ENCODE measurements at regions of chr15 and their contacts with region 1.

Region 1: DNA sequence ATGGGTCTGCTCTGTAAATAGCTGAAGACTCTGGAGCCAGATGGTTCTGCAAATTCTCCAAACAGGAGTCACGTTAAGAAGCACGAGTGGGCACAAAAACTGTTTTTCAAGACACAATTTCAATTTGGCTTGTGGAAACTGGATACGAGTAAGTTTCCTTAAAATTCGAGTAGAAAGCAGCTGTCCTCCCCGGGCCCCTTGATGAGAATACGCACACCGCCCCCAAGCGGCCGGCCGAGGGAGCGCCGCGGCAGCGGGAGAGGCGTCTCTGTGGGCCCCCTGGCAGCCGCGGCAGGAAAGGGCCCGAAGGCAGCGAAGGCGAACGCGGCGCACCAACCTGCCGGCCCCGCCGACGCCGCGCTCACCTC is 778 bp upstream of the THBS1 start:
- DNase-seq: peak; percentile 98
- ATAC-seq: peak; percentile 30
- H3K4me3 ChIP-seq: peak overlapping the region; percentile 46
- H3K27ac ChIP-seq: peak overlapping the region; percentile 78
- H3K4me1 ChIP-seq: peaks cover 8% of the 10 kb centered on the region
- H3K27me3 ChIP-seq: no peaks in the 10 kb centered on the region
- CTCF ChIP-seq: peak; percentile 99
- POLR2A ChIP-seq: no peak
- RAD21 ChIP-seq: peak; percentile 94

Region 2: DNA sequence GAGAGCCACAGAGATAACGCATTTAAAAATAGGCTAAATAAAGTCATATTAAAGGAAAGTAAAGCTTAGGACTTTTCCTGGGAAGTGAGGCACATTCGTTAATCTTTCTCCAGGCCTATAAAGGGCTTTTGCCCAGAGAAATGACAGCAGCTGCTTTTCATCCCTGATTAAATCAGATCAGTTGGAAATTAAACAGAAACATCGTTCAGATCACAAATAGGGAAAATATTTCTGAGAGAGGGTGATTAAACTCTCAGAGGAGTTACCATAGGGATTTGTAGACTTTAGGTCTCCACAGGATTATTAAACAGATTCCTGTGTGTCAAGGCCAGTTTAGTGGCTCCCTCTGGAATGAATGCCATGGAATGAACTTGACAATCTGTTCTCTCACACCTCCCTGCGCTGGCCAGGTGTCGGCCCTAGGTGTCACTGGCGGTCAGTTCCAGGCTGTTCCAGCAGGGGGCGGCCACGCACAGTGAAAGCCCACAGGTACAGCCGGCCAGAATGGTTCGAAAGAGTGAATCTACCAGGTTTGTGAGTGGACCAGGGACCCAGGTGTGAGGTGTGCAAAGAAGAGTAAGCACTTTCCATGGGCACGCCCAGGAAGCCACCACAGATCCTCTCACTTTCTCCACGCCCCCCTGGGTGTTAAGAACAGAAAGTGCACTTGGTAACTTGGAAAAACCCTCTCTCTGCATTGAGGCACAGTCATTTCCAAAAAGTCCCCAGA is 762.5 kb before region 1 on chr15:
- CTCF ChIA-PET with region 1: no interaction called
- POLR2A ChIA-PET with region 1: interaction called, 3 read pairs
- dilution Hi-C with region 1: no loop called
- in situ Hi-C with region 1: loop called (anchors 5 kb)
- intact Hi-C with region 1: loop called (anchors 2 kb)
- DNase-seq: peak; percentile 48
- ATAC-seq: peak; percentile 97
- H3K4me3 ChIP-seq: no peak overlapping the region
- H3K27ac ChIP-seq: peak overlapping the region; percentile 26
- H3K4me1 ChIP-seq: peaks cover 8% of the 10 kb centered on the region
- H3K27me3 ChIP-seq: no peaks in the 10 kb centered on the region
- CTCF ChIP-seq: peak; percentile 98
- POLR2A ChIP-seq: no peak
- RAD21 ChIP-seq: peak; percentile 95

Region 3: DNA sequence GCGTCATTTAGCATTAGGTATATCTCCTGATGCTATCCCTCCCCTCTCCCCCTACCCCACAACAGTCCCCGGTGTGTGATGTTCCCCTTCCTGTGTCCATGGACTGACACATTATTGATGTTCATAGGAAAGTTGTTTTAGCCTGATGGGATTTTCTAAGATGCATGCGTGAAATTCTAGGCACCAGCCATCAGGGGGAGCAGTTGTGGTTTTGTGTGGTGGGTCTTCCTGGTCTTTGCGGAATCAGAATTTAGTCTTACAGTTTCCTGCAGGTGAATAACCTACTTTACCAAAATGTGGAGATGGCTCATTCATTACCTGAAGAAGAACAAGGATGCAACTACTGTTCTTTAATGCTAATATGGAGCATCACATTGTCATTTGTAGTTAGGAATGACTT is 454.2 kb before region 1 on chr15:
- CTCF ChIA-PET with region 1: interaction called, 3 read pairs
- POLR2A ChIA-PET with region 1: interaction called, 5 read pairs
- dilution Hi-C with region 1: no loop called
- in situ Hi-C with region 1: loop called (anchors 5 kb)
- intact Hi-C with region 1: loop called (anchors 2 kb)
- DNase-seq: peak; percentile 68
- ATAC-seq: no peak
- H3K4me3 ChIP-seq: no peak overlapping the region
- H3K27ac ChIP-seq: peak overlapping the region; percentile 39; the same call in 1 of the 2 replicates
- H3K4me1 ChIP-seq: peaks cover 37% of the 10 kb centered on the region
- H3K27me3 ChIP-seq: no peaks in the 10 kb centered on the region
- CTCF ChIP-seq: peak; percentile 64
- POLR2A ChIP-seq: no peak
- RAD21 ChIP-seq: peak; percentile 62

Region 4: GRCh38 chr15:39199076-39199475 is 381.0 kb before region 1 on chr15:
- CTCF ChIA-PET with region 1: interaction called, 3 read pairs
- POLR2A ChIA-PET with region 1: interaction called, 10 read pairs
- dilution Hi-C with region 1: no loop called
- in situ Hi-C with region 1: no loop called
- intact Hi-C with region 1: no loop called
- DNase-seq: peak; percentile 69
- ATAC-seq: peak; percentile 40
- H3K4me3 ChIP-seq: no peak overlapping the region
- H3K27ac ChIP-seq: peak overlapping the region; percentile 70
- H3K4me1 ChIP-seq: peaks cover 25% of the 10 kb centered on the region
- H3K27me3 ChIP-seq: no peaks in the 10 kb centered on the region
- CTCF ChIP-seq: no peak
- POLR2A ChIP-seq: no peak
- RAD21 ChIP-seq: no peak

Region 5: DNA sequence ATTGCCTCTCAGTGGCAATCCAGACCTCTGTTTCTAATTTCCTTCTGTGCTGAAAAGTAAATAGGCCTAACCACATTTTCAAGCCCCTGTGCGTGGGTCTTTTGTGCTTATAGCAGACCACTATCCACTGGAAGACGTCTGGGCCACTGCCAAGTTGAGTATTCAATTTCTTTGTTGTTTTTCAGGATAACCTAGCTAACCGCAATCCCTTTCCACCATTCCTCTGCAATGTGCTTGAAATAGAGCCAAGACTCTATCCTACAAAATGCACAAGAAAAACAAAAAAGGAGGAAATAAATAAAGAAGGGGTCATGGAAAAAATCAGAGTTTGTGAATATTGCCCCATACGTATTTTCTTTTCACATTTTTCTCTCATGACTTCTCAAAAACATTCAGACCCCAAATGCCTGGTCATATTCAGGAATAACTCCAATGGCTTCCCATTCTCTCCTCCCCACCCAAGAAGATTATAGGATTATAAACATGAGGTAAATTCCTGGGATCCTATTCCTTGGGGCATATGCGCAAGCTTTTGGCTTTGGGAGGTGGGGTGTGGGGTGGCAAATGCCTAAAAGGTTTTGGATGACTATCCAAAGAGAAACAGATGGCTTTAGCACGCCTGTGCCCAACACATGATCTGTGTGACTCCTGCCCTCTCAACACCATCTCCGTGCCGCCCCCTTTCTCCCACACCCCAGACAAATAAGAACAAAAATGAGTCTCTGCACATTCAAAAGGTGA is 217.1 kb before region 1 on chr15:
- CTCF ChIA-PET with region 1: interaction called, 3 read pairs
- POLR2A ChIA-PET with region 1: interaction called, 7 read pairs
- dilution Hi-C with region 1: no loop called
- in situ Hi-C with region 1: no loop called
- intact Hi-C with region 1: loop called (anchors 1 kb)
- DNase-seq: peak; percentile 96
- ATAC-seq: peak; percentile 61
- H3K4me3 ChIP-seq: no peak overlapping the region
- H3K27ac ChIP-seq: peak overlapping the region; percentile 78; the same call in 1 of the 2 replicates
- H3K4me1 ChIP-seq: peaks cover 16% of the 10 kb centered on the region
- H3K27me3 ChIP-seq: no peaks in the 10 kb centered on the region
- CTCF ChIP-seq: no peak
- POLR2A ChIP-seq: no peak
- RAD21 ChIP-seq: no peak

Region 6: GRCh38 chr15:39459548-39459947 is 120.6 kb before region 1 on chr15:
- CTCF ChIA-PET with region 1: no interaction called
- POLR2A ChIA-PET with region 1: no interaction called
- dilution Hi-C with region 1: no loop called
- in situ Hi-C with region 1: no loop called
- intact Hi-C with region 1: no loop called
- DNase-seq: no peak
- ATAC-seq: no peak
- H3K4me3 ChIP-seq: no peak overlapping the region
- H3K27ac ChIP-seq: no peak overlapping the region
- H3K4me1 ChIP-seq: peaks cover 10% of the 10 kb centered on the region
- H3K27me3 ChIP-seq: no peaks in the 10 kb centered on the region
- CTCF ChIP-seq: no peak
- POLR2A ChIP-seq: no peak
- RAD21 ChIP-seq: no peak

Region 7: GRCh38 chr15:39511000-39511915 is 68.8 kb before region 1 on chr15:
- CTCF ChIA-PET with region 1: interaction called, 4 read pairs
- POLR2A ChIA-PET with region 1: no interaction called
- dilution Hi-C with region 1: no loop called
- in situ Hi-C with region 1: no loop called
- intact Hi-C with region 1: loop called (anchors 2 kb)
- DNase-seq: peak; percentile 93
- ATAC-seq: peak; percentile 97
- H3K4me3 ChIP-seq: no peak overlapping the region; the same call in 1 of the 2 replicates
- H3K27ac ChIP-seq: peak overlapping the region; percentile 70
- H3K4me1 ChIP-seq: peaks cover 18% of the 10 kb centered on the region
- H3K27me3 ChIP-seq: no peaks in the 10 kb centered on the region
- CTCF ChIP-seq: no peak
- POLR2A ChIP-seq: peak; percentile 33; the same call in 1 of the 2 replicates
- RAD21 ChIP-seq: peak; percentile 37